ENCODE measurements at regions of chr1 and their contacts with region 1.

Region 1: DNA sequence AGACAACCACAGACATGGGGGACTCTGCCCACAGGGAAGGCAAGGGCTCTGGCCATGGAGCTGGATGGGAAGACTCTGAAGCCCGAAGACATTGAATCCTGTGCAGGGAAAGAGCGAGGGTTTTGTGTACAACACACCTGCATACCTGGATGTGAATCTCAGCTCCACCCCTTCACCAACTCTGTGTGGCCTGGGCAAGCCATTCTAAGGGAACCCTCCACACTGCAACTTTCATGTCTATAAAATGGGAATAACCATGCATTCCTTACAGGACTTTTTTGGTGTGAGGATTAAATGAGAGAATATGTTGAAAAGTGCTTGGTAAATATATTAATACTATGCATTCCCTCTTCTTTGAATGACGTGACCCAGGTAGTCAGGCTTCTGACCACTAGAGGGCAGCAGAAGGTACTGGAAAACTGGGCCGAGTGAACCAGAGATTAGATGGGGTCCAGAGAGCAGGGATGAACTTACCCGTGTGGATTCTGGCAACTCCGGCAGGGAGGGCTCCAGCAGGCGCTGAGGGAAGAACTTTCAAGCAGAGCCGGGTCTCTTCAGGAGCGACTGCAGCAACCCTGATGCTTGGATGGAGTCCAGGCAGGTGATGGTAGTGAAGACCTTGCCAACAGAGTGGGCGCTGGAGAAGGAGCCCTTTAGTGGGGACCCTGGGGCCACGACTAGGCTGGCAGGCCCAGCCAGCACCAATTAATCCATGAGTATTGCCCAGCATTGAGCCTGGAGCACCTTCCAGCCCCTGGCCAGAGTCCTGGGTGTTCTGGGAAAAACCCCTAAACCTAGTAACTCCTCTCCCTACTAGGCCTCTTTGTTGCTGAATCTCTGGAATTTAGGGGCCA is 834 bp upstream of the ELF3 start:
- DNase-seq: peak; percentile 75 to 81
- H3K4me3 ChIP-seq: no peak overlapping the region
- H3K27ac ChIP-seq: no peak overlapping the region
- H3K4me1 ChIP-seq: peaks cover 0 to 6% (median 0%) of the 10 kb centered on the region in 4 donors
- H3K27me3 ChIP-seq: no peaks in the 10 kb centered on the region
- CTCF ChIP-seq: peak; percentile 78 to 83

Region 2: DNA sequence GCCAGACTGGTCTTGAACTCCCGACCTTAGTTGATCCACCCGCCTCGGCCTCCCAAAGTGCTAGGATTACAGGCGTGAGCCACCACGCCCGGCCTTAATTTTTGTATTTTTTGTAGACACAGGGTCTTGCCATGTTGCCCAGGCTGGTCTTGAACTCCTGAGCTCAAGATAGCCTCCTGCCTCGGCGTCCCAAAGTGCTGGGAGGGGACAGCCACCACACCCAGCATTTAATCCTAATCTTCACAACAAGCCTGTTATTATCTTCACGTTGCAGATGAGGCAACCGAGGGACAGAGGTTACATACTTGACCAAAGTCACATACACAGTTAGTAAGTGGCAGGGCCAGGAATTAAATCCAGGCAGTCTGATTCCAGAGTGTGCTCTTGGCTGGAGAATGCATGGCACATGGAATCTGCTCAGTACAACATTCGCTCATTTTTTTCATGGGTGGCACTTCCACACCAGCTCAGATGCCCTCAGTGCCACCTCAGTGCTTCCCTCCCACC is 108.4 kb after region 1 on chr1:
- intact Hi-C with region 1: loop called (anchors 5 kb)
- DNase-seq: no peak
- H3K4me3 ChIP-seq: no peak overlapping the region
- H3K27ac ChIP-seq: no peak overlapping the region
- H3K4me1 ChIP-seq: peaks cover 0 to 22% (median 6%) of the 10 kb centered on the region in 4 donors
- H3K27me3 ChIP-seq: peaks cover 0 to 7% of the 10 kb centered on the region in 2 donors
- CTCF ChIP-seq: no peak

Region 3: GRCh38 chr1:202135221-202135721 is 125.7 kb after region 1 on chr1:
- intact Hi-C with region 1: loop called (anchors 2 kb)
- DNase-seq: no peak
- H3K4me3 ChIP-seq: no peak overlapping the region
- H3K27ac ChIP-seq: peak overlapping the region; percentile 82 to 85
- H3K4me1 ChIP-seq: peaks cover 0 to 59% (median 34%) of the 10 kb centered on the region in 4 donors
- H3K27me3 ChIP-seq: no peaks in the 10 kb centered on the region
- CTCF ChIP-seq: peak; percentile 71 to 92

Region 4: DNA sequence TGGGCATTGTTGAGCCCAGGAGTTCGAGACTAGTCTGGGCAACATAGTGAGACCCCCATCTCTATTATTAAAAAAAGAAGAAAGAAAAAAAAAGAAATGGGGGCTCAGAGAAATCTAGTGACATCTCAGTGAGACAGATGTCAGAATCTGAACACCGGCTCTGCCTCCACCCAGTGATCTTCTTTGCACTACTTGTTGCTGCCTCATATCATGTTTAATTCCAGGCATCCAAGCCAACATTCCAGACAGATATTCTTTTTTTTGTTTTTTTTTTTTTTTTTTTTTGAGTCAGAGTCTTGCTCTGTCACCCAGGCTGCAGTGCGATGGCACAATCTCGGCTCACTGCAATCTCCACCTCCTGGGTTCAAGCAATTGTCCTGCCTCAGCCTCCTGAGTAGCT is 140.0 kb after region 1 on chr1:
- intact Hi-C with region 1: no loop called
- DNase-seq: no peak
- H3K4me3 ChIP-seq: no peak overlapping the region
- H3K27ac ChIP-seq: no peak overlapping the region
- H3K4me1 ChIP-seq: peaks cover 0 to 6% (median 3%) of the 10 kb centered on the region in 4 donors
- H3K27me3 ChIP-seq: peaks cover 0 to 11% of the 10 kb centered on the region in 2 donors
- CTCF ChIP-seq: no peak